WTC11 (cell line): ENCODE measurements at regions of chr1 and their contacts with region 1.

Region 1: GRCh38 chr1:23539698-23540266 is 8.7 kb upstream of the E2F2 start:
- DNase-seq: peak; percentile 97
- ATAC-seq: peak; percentile 95
- H3K4me3 Mint-ChIP-seq: no peak overlapping the region
- H3K27ac Mint-ChIP-seq: peak overlapping the region; percentile 64; the same call in 1 of the 2 replicates
- H3K4me1 Mint-ChIP-seq: peaks cover 10% of the 10 kb centered on the region
- H3K27me3 Mint-ChIP-seq: no peaks in the 10 kb centered on the region; the same call in 1 of the 2 replicates
- CTCF ChIP-seq: peak; percentile 76

Region 2: DNA sequence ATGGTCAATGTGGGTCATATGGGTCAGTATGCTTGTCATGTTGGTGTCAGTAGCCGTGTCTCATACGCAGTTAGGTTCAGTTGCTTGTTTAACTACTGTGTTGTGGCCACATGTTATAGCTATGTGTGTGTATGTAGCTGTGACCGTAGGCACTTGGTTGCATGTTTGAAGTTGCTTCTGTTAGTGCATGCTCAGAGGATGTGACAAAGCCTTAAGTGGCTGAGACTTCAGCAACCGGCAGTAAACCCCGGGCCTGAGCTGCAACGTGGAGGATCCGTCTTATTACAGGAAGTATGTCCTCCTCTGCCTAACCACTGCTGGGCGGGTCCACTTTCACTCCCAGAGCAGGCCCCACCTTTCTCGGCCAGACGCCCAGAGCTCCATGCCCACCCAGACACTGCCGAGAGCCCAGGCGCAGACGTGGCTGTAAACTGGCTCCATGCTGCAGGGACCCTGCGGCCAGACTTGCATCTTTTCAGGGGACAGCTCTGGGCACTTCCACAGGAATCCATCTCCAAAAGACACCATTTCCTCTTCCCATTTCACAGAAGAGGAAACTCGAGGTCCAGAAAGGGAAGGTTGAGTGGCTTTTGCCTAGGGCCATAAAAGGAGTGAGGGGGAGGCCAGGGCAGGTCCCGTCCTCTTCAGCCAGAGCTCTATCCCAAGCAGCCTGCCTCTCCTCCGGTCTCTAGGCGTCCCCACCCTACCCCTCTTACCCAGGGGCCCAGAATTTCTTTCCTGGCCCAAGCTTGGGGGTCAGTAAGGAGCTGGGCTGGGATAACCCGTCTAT is 117.3 kb before region 1 on chr1:
- CTCF ChIA-PET with region 1: interaction called, 20 read pairs
- POLR2A ChIA-PET with region 1: no interaction called
- DNase-seq: no peak
- ATAC-seq: no peak
- H3K4me3 Mint-ChIP-seq: no peak overlapping the region
- H3K27ac Mint-ChIP-seq: no peak overlapping the region
- H3K4me1 Mint-ChIP-seq: peaks cover 11% of the 10 kb centered on the region
- H3K27me3 Mint-ChIP-seq: peaks cover 100% of the 10 kb centered on the region
- CTCF ChIP-seq: no peak

Region 3: DNA sequence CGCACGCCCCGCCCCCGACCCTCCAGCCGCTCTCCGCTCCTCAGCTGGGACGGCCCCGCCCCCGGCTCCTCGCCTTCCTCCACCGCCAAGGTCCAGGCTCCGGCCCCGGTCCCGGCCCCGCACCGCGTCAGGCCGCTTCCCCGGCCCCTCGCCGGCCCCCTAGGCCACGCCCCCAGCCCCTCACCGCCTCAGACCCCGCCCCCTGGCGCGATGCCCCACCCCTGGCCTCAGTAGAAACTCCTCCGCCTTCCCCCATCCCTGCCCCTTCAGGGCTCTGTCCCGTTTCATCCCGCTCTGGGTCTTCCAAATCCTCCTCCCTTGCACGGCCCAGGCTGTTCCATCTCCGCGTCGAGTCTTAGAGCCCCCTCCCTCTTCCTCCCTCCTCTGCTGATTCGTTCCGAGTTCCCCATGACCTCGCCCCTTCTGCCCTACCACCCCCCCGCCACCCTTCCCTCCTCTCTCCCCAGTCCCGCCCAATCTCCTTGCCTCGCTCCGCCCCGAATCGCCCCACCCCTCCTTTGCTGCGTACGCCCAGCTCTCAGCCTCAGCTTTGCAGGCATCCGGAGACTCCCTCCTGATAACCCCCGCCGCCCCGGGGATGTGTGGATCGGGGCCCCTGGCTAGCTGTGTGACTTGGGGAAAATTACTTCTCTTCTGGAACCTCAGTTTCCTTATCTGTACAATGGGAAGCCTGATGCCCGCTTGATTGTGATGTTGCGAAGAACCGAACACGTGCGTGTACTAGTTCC is 55.4 kb before region 1 on chr1:
- CTCF ChIA-PET with region 1: interaction called, 28 read pairs
- POLR2A ChIA-PET with region 1: interaction called, 8 read pairs
- DNase-seq: peak; percentile 97
- ATAC-seq: peak; percentile 87
- H3K4me3 Mint-ChIP-seq: peak overlapping the region; percentile 82
- H3K27ac Mint-ChIP-seq: peak overlapping the region; percentile 96
- H3K4me1 Mint-ChIP-seq: peaks cover 44% of the 10 kb centered on the region
- H3K27me3 Mint-ChIP-seq: peaks cover 13% of the 10 kb centered on the region
- CTCF ChIP-seq: no peak

Region 4: DNA sequence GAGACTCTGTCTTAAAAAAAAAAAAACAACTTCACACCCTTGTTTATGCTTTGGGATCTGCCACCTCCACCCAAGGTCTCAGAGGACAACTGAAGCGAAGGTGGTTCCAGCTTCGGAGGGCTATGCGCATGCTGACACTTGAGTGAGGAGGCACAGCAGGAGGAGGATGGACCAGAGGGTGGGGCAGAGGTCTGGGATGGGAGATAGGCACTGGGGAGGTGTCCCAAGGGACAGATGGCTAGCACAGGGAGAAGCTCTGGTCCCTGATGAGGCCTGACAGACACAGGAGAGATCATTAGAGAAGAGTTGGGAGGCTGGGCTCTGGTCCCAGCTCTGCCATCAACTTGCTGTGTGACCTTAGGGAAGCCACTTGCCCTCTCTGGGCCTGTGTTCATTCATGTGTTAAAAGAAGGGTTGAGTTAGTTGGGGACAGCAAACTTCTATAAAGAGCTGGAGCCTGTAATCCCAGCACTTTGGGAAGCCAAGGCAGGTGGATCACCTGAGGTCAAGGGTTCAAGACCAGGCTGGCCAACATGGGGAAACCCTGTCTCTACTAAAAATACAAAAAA is 25.6 kb before region 1 on chr1:
- CTCF ChIA-PET with region 1: no interaction called
- POLR2A ChIA-PET with region 1: no interaction called
- DNase-seq: no peak
- ATAC-seq: no peak
- H3K4me3 Mint-ChIP-seq: no peak overlapping the region
- H3K27ac Mint-ChIP-seq: no peak overlapping the region
- H3K4me1 Mint-ChIP-seq: no peaks in the 10 kb centered on the region
- H3K27me3 Mint-ChIP-seq: no peaks in the 10 kb centered on the region
- CTCF ChIP-seq: no peak

Region 5: GRCh38 chr1:23524716-23525401 is 14.9 kb before region 1 on chr1:
- CTCF ChIA-PET with region 1: interaction called, 58 read pairs
- POLR2A ChIA-PET with region 1: interaction called, 5 read pairs
- DNase-seq: no peak
- ATAC-seq: no peak; the same call in 1 of the 2 replicates
- H3K4me3 Mint-ChIP-seq: no peak overlapping the region
- H3K27ac Mint-ChIP-seq: no peak overlapping the region
- H3K4me1 Mint-ChIP-seq: peaks cover 15% of the 10 kb centered on the region
- H3K27me3 Mint-ChIP-seq: peaks cover 15% of the 10 kb centered on the region
- CTCF ChIP-seq: no peak

Region 6: GRCh38 chr1:23643736-23644554 is 104.2 kb after region 1 on chr1:
- CTCF ChIA-PET with region 1: interaction called, 201 read pairs
- POLR2A ChIA-PET with region 1: no interaction called
- DNase-seq: no peak
- ATAC-seq: peak; percentile 52
- H3K4me3 Mint-ChIP-seq: no peak overlapping the region
- H3K27ac Mint-ChIP-seq: no peak overlapping the region
- H3K4me1 Mint-ChIP-seq: peaks cover 5% of the 10 kb centered on the region
- H3K27me3 Mint-ChIP-seq: peaks cover 6% of the 10 kb centered on the region; the same call in 1 of the 2 replicates
- CTCF ChIP-seq: no peak

Region 7: GRCh38 chr1:23664837-23665795 is 125.3 kb after region 1 on chr1:
- CTCF ChIA-PET with region 1: interaction called, 17 read pairs
- POLR2A ChIA-PET with region 1: no interaction called
- DNase-seq: peak; percentile 16
- ATAC-seq: peak; percentile 56
- H3K4me3 Mint-ChIP-seq: no peak overlapping the region
- H3K27ac Mint-ChIP-seq: no peak overlapping the region
- H3K4me1 Mint-ChIP-seq: peaks cover 3% of the 10 kb centered on the region; the same call in 1 of the 2 replicates
- H3K27me3 Mint-ChIP-seq: no peaks in the 10 kb centered on the region
- CTCF ChIP-seq: peak; percentile 62